CD8-positive, alpha-beta T cell (primary cell): ENCODE measurements at regions of chr9 and their contacts with region 1.

Region 1: GRCh38 chr9:91193658-91194391 is 167.9 kb downstream of the AUH start:
- DNase-seq: peak; percentile 22 to 83 (median 60)
- ATAC-seq: peak; percentile 79
- H3K4me3 ChIP-seq: peak overlapping the region; percentile 46 to 59
- H3K4me3 Mint-ChIP-seq: peak overlapping the region; percentile 86
- H3K27ac ChIP-seq: peak overlapping the region; percentile 50 to 68
- H3K27ac Mint-ChIP-seq: peak overlapping the region; percentile 88
- H3K4me1 ChIP-seq: peaks cover 27% of the 10 kb centered on the region
- H3K4me1 Mint-ChIP-seq: peaks cover 33% of the 10 kb centered on the region
- H3K27me3 ChIP-seq: no peaks in the 10 kb centered on the region
- H3K27me3 Mint-ChIP-seq: no peaks in the 10 kb centered on the region
- CTCF ChIP-seq: no peak

Region 2: DNA sequence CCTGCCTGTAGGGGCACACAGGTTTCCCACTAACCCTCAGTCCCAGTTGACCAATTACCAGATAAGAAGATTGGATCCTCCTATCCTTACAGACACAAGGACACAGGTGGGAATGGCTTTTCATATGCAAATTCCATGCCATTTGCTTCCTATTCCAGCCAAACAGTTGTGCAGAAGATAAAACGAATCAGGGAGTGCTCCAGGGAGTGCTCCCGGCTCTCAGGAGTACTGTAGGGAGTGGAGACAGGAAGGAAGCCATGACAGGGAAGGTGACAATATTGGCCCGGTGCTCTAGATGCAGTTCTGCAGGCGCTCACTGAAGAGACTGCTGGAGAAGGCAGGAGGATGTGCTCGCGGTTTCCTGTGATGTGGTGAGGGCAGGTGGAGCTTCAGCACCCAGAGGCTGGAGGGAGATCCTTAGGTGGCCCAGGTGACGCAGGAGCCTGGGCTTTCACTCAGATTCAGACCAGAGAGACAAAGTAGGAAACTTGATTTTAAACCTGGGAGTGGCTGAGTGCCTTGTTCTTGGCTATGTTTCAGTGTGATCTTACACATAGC is 92.1 kb before region 1 on chr9:
- CTCF ChIA-PET with region 1: no interaction called
- POLR2A ChIA-PET with region 1: interaction called, 3 read pairs
- intact Hi-C with region 1: loop called in 1 of 2 experiments (anchors 5 kb)
- DNase-seq: peak; percentile 62 to 95 (median 78)
- ATAC-seq: peak; percentile 86
- H3K4me3 ChIP-seq: peak overlapping the region in 1 of 2 experiments; percentile 1
- H3K4me3 Mint-ChIP-seq: peak overlapping the region; percentile 53
- H3K27ac ChIP-seq: no peak overlapping the region
- H3K27ac Mint-ChIP-seq: peak overlapping the region; percentile 74
- H3K4me1 ChIP-seq: peaks cover 35% of the 10 kb centered on the region
- H3K4me1 Mint-ChIP-seq: peaks cover 37% of the 10 kb centered on the region
- H3K27me3 ChIP-seq: no peaks in the 10 kb centered on the region
- H3K27me3 Mint-ChIP-seq: no peaks in the 10 kb centered on the region
- CTCF ChIP-seq: no peak

Region 3: GRCh38 chr9:91131433-91131839 is 62.4 kb before region 1 on chr9:
- CTCF ChIA-PET with region 1: no interaction called
- POLR2A ChIA-PET with region 1: no interaction called
- intact Hi-C with region 1: loop called in 1 of 2 experiments (anchors 5 kb)
- DNase-seq: peak in 7 of 9 experiments; percentile 19 to 78 (median 57)
- ATAC-seq: peak; percentile 91
- H3K4me3 ChIP-seq: no peak overlapping the region
- H3K4me3 Mint-ChIP-seq: no peak overlapping the region
- H3K27ac ChIP-seq: peak overlapping the region in 1 of 2 experiments; percentile 40
- H3K27ac Mint-ChIP-seq: no peak overlapping the region
- H3K4me1 ChIP-seq: no peaks in the 10 kb centered on the region
- H3K4me1 Mint-ChIP-seq: peaks cover 11% of the 10 kb centered on the region
- H3K27me3 ChIP-seq: no peaks in the 10 kb centered on the region
- H3K27me3 Mint-ChIP-seq: peaks cover 2% of the 10 kb centered on the region
- CTCF ChIP-seq: no peak

Region 4: GRCh38 chr9:91150998-91151717 is 42.7 kb before region 1 on chr9:
- CTCF ChIA-PET with region 1: interaction called, 3 read pairs
- POLR2A ChIA-PET with region 1: no interaction called
- intact Hi-C with region 1: loop called (anchors 1 kb)
- DNase-seq: peak in 4 of 9 experiments; percentile 37 to 92 (median 66)
- ATAC-seq: peak; percentile 92
- H3K4me3 ChIP-seq: no peak overlapping the region
- H3K4me3 Mint-ChIP-seq: peak overlapping the region; percentile 23
- H3K27ac ChIP-seq: peak overlapping the region in 1 of 2 experiments; percentile 73
- H3K27ac Mint-ChIP-seq: peak overlapping the region; percentile 56
- H3K4me1 ChIP-seq: peaks cover 31% of the 10 kb centered on the region
- H3K4me1 Mint-ChIP-seq: peaks cover 48% of the 10 kb centered on the region
- H3K27me3 ChIP-seq: no peaks in the 10 kb centered on the region
- H3K27me3 Mint-ChIP-seq: no peaks in the 10 kb centered on the region
- CTCF ChIP-seq: no peak

Region 5: GRCh38 chr9:91253488-91253887 is 59.7 kb after region 1 on chr9:
- CTCF ChIA-PET with region 1: no interaction called
- POLR2A ChIA-PET with region 1: no interaction called
- intact Hi-C with region 1: no loop called
- DNase-seq: peak in 4 of 9 experiments; percentile 7 to 78 (median 41)
- ATAC-seq: peak; percentile 80
- H3K4me3 ChIP-seq: no peak overlapping the region
- H3K4me3 Mint-ChIP-seq: no peak overlapping the region
- H3K27ac ChIP-seq: no peak overlapping the region
- H3K27ac Mint-ChIP-seq: no peak overlapping the region
- H3K4me1 ChIP-seq: no peaks in the 10 kb centered on the region
- H3K4me1 Mint-ChIP-seq: peaks cover 19% of the 10 kb centered on the region
- H3K27me3 ChIP-seq: no peaks in the 10 kb centered on the region
- H3K27me3 Mint-ChIP-seq: no peaks in the 10 kb centered on the region
- CTCF ChIP-seq: no peak

Region 6: GRCh38 chr9:91285729-91286353 is 92.0 kb after region 1 on chr9:
- CTCF ChIA-PET with region 1: no interaction called
- POLR2A ChIA-PET with region 1: no interaction called
- intact Hi-C with region 1: no loop called
- DNase-seq: no peak
- ATAC-seq: no peak
- H3K4me3 ChIP-seq: no peak overlapping the region
- H3K4me3 Mint-ChIP-seq: no peak overlapping the region
- H3K27ac ChIP-seq: no peak overlapping the region
- H3K27ac Mint-ChIP-seq: no peak overlapping the region
- H3K4me1 ChIP-seq: no peaks in the 10 kb centered on the region
- H3K4me1 Mint-ChIP-seq: peaks cover 3% of the 10 kb centered on the region
- H3K27me3 ChIP-seq: no peaks in the 10 kb centered on the region
- H3K27me3 Mint-ChIP-seq: no peaks in the 10 kb centered on the region
- CTCF ChIP-seq: no peak

Region 7: GRCh38 chr9:91361291-91362050 is 167.6 kb after region 1 on chr9 and contains the start of gene AUH:
- CTCF ChIA-PET with region 1: no interaction called
- POLR2A ChIA-PET with region 1: interaction called, 3 read pairs
- intact Hi-C with region 1: loop called in 1 of 2 experiments (anchors 2 kb)
- DNase-seq: peak; percentile 72 to 94 (median 83)
- ATAC-seq: peak; percentile 95
- H3K4me3 ChIP-seq: peak within 1 kb of the TSS; percentile 67 to 78
- H3K4me3 Mint-ChIP-seq: peak within 1 kb of the TSS; percentile 97
- H3K27ac ChIP-seq: peak within 1 kb of the TSS; percentile 64 to 77
- H3K27ac Mint-ChIP-seq: peak within 1 kb of the TSS; percentile 95
- H3K4me1 ChIP-seq: peaks cover 26% of the 10 kb centered on the region
- H3K4me1 Mint-ChIP-seq: peaks cover 54% of the 10 kb centered on the region
- H3K27me3 ChIP-seq: no peaks in the 10 kb centered on the region
- H3K27me3 Mint-ChIP-seq: no peaks in the 10 kb centered on the region
- CTCF ChIP-seq: peak; percentile 25
- total RNA-seq, gene AUH: 13.4 to 15.2 TPM